CD8-positive, alpha-beta T cell (primary cell): ENCODE measurements at regions of chr17 and their contacts with region 1.

Region 1: DNA sequence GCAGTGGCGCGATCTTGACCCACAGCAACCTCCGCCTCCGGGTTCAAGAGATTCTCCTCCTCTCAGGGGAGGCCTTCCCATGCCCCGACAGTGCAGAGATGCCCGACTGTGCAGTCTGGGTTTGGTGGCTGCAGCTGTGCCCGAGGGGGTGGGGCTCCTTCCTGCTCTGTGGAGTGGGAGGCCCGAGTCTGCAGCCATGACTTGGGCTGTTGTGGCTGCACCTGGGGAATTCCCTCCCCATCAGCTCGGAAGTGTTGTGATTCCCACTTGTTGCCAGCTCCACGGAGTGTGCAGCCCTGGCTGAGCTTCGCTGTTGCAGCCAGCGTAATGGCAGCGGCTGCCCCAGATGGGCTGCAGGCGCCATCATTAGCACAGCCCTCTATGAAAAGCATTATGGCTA is 66.4 kb upstream of the SMIM36 start:
- DNase-seq: peak in 4 of 9 experiments; percentile 3 to 24 (median 17)
- ATAC-seq: no peak
- H3K4me3 ChIP-seq: peak overlapping the region; percentile 27 to 49
- H3K4me3 Mint-ChIP-seq: no peak overlapping the region
- H3K27ac ChIP-seq: no peak overlapping the region
- H3K27ac Mint-ChIP-seq: no peak overlapping the region
- H3K4me1 ChIP-seq: peaks cover 15% of the 10 kb centered on the region
- H3K4me1 Mint-ChIP-seq: no peaks in the 10 kb centered on the region
- H3K27me3 ChIP-seq: peaks cover 0 to 2% of the 10 kb centered on the region in 2 experiments
- H3K27me3 Mint-ChIP-seq: peaks cover 2% of the 10 kb centered on the region
- CTCF ChIP-seq: no peak

Region 2: GRCh38 chr17:55555772-55556171 is 21.9 kb before region 1 on chr17:
- CTCF ChIA-PET with region 1: no interaction called
- POLR2A ChIA-PET with region 1: no interaction called
- intact Hi-C with region 1: no loop called
- DNase-seq: no peak
- ATAC-seq: no peak
- H3K4me3 ChIP-seq: no peak overlapping the region
- H3K4me3 Mint-ChIP-seq: no peak overlapping the region
- H3K27ac ChIP-seq: no peak overlapping the region
- H3K27ac Mint-ChIP-seq: no peak overlapping the region
- H3K4me1 ChIP-seq: no peaks in the 10 kb centered on the region
- H3K4me1 Mint-ChIP-seq: no peaks in the 10 kb centered on the region
- H3K27me3 ChIP-seq: no peaks in the 10 kb centered on the region
- H3K27me3 Mint-ChIP-seq: peaks cover 17% of the 10 kb centered on the region
- CTCF ChIP-seq: no peak

Region 3: DNA sequence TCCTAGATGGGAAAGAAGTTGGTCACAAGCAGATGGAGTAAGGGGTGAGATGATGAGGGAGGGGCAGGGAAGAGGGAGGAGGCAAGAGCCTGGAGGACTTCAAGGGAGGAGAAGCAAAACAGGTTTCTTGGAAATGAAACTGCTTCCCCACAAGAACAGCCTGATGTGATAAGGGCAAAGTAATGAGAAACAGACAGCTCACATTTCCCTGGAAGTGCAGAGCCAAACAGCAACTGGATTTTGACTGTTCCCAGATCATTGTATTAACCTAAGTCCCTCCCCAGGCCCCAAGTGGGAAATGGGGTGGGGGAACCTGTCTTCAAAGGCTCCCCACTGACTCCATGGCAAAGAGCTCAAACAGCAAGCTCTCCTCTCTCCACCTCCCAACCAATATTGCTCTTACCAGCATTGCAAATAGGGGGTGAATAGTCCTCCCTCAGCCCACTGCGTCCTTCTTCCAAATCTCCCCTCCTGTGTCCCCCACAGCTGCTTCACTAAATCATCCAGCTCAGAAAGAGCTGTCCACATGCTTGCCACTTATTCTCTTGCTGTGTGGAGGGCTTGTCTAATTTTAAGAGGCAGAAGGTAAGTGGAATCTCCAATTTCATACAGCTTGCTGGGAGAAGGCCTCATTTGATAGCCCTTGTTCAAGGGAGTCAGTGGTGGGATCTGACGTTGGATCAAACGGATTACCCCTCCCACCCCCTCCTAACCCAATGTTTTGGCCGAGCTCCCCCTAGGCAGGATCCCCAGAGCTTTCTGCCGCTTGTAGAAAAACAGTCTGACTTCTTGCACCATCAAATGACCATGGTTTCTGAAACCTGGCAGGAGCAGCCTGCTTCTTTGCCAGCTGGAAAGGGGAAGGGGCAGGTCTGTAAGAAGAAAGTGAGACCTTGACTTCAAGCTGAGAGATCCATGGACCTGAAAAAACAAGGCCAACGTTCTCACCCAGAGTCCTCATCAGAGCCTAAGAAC is 10.2 kb before region 1 on chr17:
- CTCF ChIA-PET with region 1: interaction called, 3 read pairs
- POLR2A ChIA-PET with region 1: interaction called, 3 read pairs
- intact Hi-C with region 1: loop called in 1 of 2 experiments (anchors 1 kb)
- DNase-seq: no peak
- ATAC-seq: no peak
- H3K4me3 ChIP-seq: no peak overlapping the region
- H3K4me3 Mint-ChIP-seq: no peak overlapping the region
- H3K27ac ChIP-seq: no peak overlapping the region
- H3K27ac Mint-ChIP-seq: no peak overlapping the region
- H3K4me1 ChIP-seq: no peaks in the 10 kb centered on the region
- H3K4me1 Mint-ChIP-seq: no peaks in the 10 kb centered on the region
- H3K27me3 ChIP-seq: no peaks in the 10 kb centered on the region
- H3K27me3 Mint-ChIP-seq: peaks cover 4% of the 10 kb centered on the region
- CTCF ChIP-seq: no peak